ENCODE measurements at regions of chr16 and their contacts with region 1.

Region 1: DNA sequence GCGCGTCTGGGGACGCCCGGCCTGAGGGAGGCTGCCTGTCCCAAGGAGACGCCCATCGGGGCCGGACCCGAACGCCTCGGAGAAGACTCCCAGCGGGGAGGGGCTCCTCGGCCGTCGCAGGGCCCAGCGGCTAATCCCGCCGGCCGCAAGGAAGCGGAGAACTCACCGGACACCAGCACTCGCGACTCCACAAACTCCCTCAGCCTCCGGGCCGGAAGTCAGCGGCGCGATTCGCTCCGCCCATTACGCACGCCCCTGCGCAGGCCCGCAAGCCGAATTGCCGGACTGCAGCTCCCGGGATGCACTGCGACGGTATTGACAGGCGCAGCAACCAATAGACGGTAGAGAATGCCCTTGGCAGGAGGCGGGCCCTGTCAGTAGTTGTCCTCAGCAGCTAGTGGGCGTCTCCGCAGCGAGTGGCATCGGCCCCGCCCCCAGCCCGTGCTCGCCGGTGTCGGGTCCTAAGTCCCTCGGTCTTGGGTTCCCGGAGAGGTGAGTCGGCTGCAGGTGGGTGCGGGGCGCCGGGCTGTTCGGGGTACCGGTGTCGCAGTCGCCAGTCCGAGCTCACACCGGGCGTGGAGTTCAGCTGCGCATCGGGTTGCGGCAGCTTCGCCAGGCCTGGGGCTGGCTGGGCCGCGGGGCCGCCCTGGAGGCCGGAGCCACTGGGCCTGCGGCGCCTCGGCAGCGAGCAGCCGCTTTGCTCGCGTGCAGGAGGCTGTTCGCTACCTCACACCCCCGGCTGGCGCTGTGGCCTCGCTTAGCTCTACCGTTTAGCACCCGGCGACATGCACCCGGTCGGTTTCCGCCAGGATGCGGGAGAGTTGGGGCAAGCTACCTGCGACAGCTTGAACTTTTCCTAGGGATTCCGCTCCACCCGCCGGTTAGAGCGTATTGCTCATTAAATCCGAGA is at the starts of genes ZNF174 and ZSCAN32:
- DNase-seq: peak; percentile 99
- ATAC-seq: peak; percentile 97
- H3K4me3 ChIP-seq: peak within 1 kb of the TSS; percentile 59 to 84 (median 76)
- H3K4me3 Mint-ChIP-seq: peak within 1 kb of the TSS; percentile 98
- H3K27ac ChIP-seq: peak within 1 kb of the TSS; percentile 13 to 80
- H3K27ac Mint-ChIP-seq: peak within 1 kb of the TSS; percentile 97
- H3K4me1 ChIP-seq: peaks cover 11 to 23% of the 10 kb centered on the region in 2 donors
- H3K4me1 Mint-ChIP-seq: peaks cover 50% of the 10 kb centered on the region
- H3K27me3 ChIP-seq: no peaks in the 10 kb centered on the region
- H3K27me3 Mint-ChIP-seq: no peaks in the 10 kb centered on the region
- CTCF ChIP-seq: no peak
- total RNA-seq, gene ZNF174: 12.7 and 13.3 TPM in 2 replicates
- total RNA-seq, gene ZSCAN32: 25.9 and 26.9 TPM in 2 replicates

Region 2: DNA sequence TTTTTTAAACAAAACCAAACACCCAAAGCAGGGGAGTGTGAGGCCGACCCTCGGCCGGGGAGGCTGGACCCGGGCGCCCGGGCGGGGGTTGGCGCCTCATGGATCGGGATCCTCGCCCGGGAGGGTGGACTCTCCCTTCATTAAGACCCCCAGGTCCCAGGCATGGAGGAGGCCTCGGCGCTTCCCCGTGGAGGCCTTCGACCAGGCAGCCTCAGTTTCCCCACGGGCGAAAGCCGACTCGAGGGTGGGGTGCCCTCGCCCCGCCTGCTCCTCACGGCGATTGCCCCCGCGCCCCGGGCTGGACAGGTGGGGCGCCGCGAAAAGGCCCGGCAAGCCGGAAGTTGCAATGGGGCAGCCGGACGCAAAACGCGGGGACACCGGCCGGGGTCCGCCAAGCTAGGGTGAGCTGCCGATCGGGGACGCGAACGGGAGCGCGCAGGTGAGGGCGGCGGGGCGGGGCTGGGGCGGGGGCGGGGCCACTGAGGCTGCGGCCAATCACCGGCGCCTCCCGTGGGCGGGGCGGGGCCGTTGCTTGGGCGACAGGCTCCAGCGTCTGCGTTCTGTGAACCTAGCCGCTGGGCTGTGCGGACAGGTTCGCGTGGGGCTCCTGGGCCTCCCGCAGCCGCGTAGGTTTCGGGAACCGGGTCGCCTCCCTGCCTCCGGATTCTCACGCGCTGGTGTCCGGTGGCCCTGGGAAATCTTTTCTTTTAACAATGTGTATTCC is 294.7 kb before region 1 on chr16:
- CTCF ChIA-PET with region 1: no interaction called
- POLR2A ChIA-PET with region 1: no interaction called
- intact Hi-C with region 1: loop called (anchors 2 kb)
- DNase-seq: peak; percentile 92
- ATAC-seq: peak; percentile 95
- H3K4me3 ChIP-seq: peak overlapping the region; percentile 70 to 85 (median 78)
- H3K4me3 Mint-ChIP-seq: peak overlapping the region; percentile 82
- H3K27ac ChIP-seq: peak overlapping the region; percentile 77 to 78
- H3K27ac Mint-ChIP-seq: peak overlapping the region; percentile 70
- H3K4me1 ChIP-seq: peaks cover 15 to 24% of the 10 kb centered on the region in 2 donors
- H3K4me1 Mint-ChIP-seq: peaks cover 18% of the 10 kb centered on the region
- H3K27me3 ChIP-seq: peaks cover 0 to under 1% (median 0%) of the 10 kb centered on the region in 4 experiments
- H3K27me3 Mint-ChIP-seq: no peaks in the 10 kb centered on the region
- CTCF ChIP-seq: no peak

Region 3: GRCh38 chr16:3282730-3283524 is 118.1 kb before region 1 on chr16 and contains the start of gene ZNF263:
- CTCF ChIA-PET with region 1: interaction called, 3 read pairs
- POLR2A ChIA-PET with region 1: interaction called, 13 read pairs
- intact Hi-C with region 1: loop called (anchors 1 kb)
- DNase-seq: peak; percentile 96
- ATAC-seq: peak; percentile 89
- H3K4me3 ChIP-seq: peak within 1 kb of the TSS; percentile 78 to 100 (median 95)
- H3K4me3 Mint-ChIP-seq: peak within 1 kb of the TSS; percentile 97
- H3K27ac ChIP-seq: peak within 1 kb of the TSS; percentile 97 to 99
- H3K27ac Mint-ChIP-seq: peak within 1 kb of the TSS; percentile 98
- H3K4me1 ChIP-seq: peaks cover 22 to 30% of the 10 kb centered on the region in 2 donors
- H3K4me1 Mint-ChIP-seq: peaks cover 37% of the 10 kb centered on the region
- H3K27me3 ChIP-seq: no peaks in the 10 kb centered on the region
- H3K27me3 Mint-ChIP-seq: no peaks in the 10 kb centered on the region
- CTCF ChIP-seq: no peak
- total RNA-seq, gene ZNF263: 43.0 and 46.0 TPM in 2 replicates

Region 4: GRCh38 chr16:3443108-3444031 is 42.3 kb after region 1 on chr16 and contains the starts of genes NAA60 and ZNF597:
- CTCF ChIA-PET with region 1: interaction called, 4 read pairs
- POLR2A ChIA-PET with region 1: interaction called, 4 read pairs
- intact Hi-C with region 1: loop called (anchors 1 kb)
- DNase-seq: peak; percentile 86
- ATAC-seq: peak; percentile 98
- H3K4me3 ChIP-seq: peak within 1 kb of the TSS; percentile 53 to 79 (median 62)
- H3K4me3 Mint-ChIP-seq: peak within 1 kb of the TSS; percentile 95
- H3K27ac ChIP-seq: peak within 1 kb of the TSS; percentile 34 to 83
- H3K27ac Mint-ChIP-seq: peak within 1 kb of the TSS; percentile 91
- H3K4me1 ChIP-seq: peaks cover 11% of the 10 kb centered on the region in 2 donors
- H3K4me1 Mint-ChIP-seq: peaks cover 21% of the 10 kb centered on the region
- H3K27me3 ChIP-seq: no peaks in the 10 kb centered on the region
- H3K27me3 Mint-ChIP-seq: peaks cover 3% of the 10 kb centered on the region
- CTCF ChIP-seq: no peak
- total RNA-seq, gene NAA60: 50.9 and 52.9 TPM in 2 replicates
- total RNA-seq, gene ZNF597: 4.6 and 5.0 TPM in 2 replicates

Region 5: DNA sequence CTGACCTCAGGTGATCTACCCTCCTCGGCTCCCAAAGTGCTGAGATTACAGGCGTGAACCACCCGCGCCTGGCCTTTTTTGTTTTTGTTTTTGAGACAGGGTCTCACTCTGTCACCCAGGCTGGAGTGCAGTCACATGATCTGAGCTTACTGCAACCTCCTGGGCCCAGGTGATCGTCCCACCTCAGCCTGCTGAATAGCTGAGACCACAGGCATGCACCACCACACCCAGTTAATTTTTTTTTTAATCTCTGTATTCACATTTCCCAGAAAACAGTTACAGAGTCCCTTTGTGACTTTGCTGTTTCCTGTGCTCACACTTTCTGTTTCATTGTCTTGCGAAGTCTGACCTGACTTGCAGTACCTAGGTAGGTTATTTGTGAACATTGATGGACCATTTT is 102.5 kb after region 1 on chr16:
- CTCF ChIA-PET with region 1: no interaction called
- POLR2A ChIA-PET with region 1: no interaction called
- intact Hi-C with region 1: loop called (anchors 1 kb)
- DNase-seq: no peak
- ATAC-seq: no peak
- H3K4me3 ChIP-seq: no peak overlapping the region
- H3K4me3 Mint-ChIP-seq: peak overlapping the region; percentile 32
- H3K27ac ChIP-seq: no peak overlapping the region
- H3K27ac Mint-ChIP-seq: no peak overlapping the region
- H3K4me1 ChIP-seq: peaks cover 11 to 22% of the 10 kb centered on the region in 2 donors
- H3K4me1 Mint-ChIP-seq: peaks cover 30% of the 10 kb centered on the region
- H3K27me3 ChIP-seq: no peaks in the 10 kb centered on the region
- H3K27me3 Mint-ChIP-seq: no peaks in the 10 kb centered on the region
- CTCF ChIP-seq: no peak

Measured in B cell (primary cell).